ENCODE measurements at regions of chr17 and their contacts with region 1.

Region 1: GRCh38 chr17:45148183-45149036 is at the start of gene HEXIM1:
- DNase-seq: peak; percentile 98 to 100 (median 99)
- ATAC-seq: peak; percentile 78
- H3K4me3 ChIP-seq: peak within 1 kb of the TSS; percentile 94
- H3K4me3 Mint-ChIP-seq: peak within 1 kb of the TSS; percentile 94
- H3K27ac ChIP-seq: peak within 1 kb of the TSS; percentile 93 to 97
- H3K27ac Mint-ChIP-seq: peak within 1 kb of the TSS; percentile 99
- H3K4me1 ChIP-seq: peaks cover 71% of the 10 kb centered on the region
- H3K4me1 Mint-ChIP-seq: peaks cover 69% of the 10 kb centered on the region
- H3K27me3 ChIP-seq: no peaks in the 10 kb centered on the region
- H3K27me3 Mint-ChIP-seq: peaks cover 8% of the 10 kb centered on the region
- CTCF ChIP-seq: no peak
- total RNA-seq, gene HEXIM1: 50.5 to 50.9 TPM

Region 2: DNA sequence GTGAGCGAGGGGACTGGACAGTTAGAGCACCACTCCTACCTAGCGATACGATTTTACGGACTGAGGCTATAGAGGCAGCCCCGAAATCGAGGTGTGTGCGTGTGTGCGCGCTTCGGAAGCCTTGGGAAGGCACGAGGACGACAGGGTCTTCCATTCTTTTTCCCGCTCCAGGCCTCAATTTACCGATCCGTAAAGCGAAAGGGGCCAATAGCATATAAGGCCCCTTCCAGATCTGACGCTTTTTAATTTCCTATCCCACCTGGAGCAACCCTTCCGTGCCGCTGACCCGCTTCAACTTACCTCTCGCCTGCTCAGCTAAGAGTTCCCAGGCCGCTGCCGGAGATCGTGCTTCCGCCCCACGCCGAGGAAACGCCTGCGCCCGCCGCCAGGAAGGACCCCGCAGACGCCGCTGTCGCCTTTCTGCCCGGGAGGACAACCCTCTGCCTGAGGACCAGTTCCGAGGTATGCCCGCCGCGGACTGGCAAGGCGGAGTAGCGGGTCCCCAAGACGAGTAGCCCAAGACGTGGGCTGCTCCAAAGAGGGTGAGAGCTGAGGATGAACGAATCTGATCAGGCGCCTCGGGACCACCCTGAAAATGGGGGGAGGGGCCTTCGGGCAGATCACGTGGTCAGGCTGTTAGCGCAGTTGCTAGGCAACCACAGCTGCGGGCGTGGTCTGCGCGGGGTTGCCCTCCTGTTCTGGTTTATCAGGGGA is 249.2 kb before region 1 on chr17 and contains the start of gene EFTUD2:
- CTCF ChIA-PET with region 1: no interaction called
- POLR2A ChIA-PET with region 1: interaction called, 13 read pairs
- intact Hi-C with region 1: no loop called
- DNase-seq: peak; percentile 87 to 96 (median 91)
- ATAC-seq: peak; percentile 95
- H3K4me3 ChIP-seq: peak within 1 kb of the TSS; percentile 82
- H3K4me3 Mint-ChIP-seq: peak within 1 kb of the TSS; percentile 95
- H3K27ac ChIP-seq: peak within 1 kb of the TSS; percentile 98 to 99
- H3K27ac Mint-ChIP-seq: peak within 1 kb of the TSS; percentile 99
- H3K4me1 ChIP-seq: peaks cover 29% of the 10 kb centered on the region
- H3K4me1 Mint-ChIP-seq: peaks cover 37% of the 10 kb centered on the region
- H3K27me3 ChIP-seq: no peaks in the 10 kb centered on the region
- H3K27me3 Mint-ChIP-seq: peaks cover 10% of the 10 kb centered on the region
- CTCF ChIP-seq: no peak
- total RNA-seq, gene EFTUD2: 105 to 112 TPM

Region 3: DNA sequence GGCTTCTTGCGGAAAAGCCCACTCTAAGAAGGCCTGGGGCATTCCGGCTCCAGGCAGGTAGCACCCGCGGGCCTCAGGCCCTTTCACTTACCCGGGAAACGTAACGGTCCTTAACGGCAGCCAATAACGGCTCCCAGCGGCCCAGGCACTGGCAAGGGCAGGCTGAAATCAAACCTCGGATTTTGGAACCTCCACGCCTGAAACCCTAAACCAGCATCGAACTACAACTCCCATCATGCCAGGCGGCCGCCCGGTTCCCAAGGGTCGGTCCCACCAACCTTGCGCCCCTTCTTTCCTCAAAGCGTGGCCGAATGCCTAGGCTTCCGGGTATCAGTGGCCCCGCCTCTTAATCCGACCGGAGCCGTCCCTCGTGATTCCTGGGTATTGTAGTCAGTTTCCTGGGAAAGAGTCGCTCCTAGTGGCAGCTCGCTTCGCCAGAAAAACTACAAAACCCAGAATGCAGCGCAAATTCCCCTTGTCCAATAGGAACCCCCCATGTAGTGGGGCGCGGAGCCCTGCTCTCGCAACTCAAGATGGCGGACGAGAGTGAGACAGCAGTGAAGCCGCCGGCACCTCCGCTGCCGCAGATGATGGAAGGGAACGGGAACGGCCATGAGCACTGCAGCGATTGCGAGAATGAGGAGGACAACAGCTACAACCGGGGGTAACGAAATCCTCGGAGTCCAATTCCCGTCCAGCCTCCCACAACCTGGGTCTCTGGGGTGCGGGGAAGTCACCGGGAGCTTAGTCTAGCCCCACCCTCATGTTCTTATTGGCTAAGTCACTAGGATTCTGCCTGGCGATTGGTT is 87.4 kb before region 1 on chr17 and contains the start of gene NMT1:
- CTCF ChIA-PET with region 1: no interaction called
- POLR2A ChIA-PET with region 1: interaction called, 22 read pairs
- intact Hi-C with region 1: loop called in 1 of 2 experiments (anchors 5 kb)
- DNase-seq: peak; percentile 87 to 99 (median 92)
- ATAC-seq: peak; percentile 89
- H3K4me3 ChIP-seq: peak within 1 kb of the TSS; percentile 72
- H3K4me3 Mint-ChIP-seq: peak within 1 kb of the TSS; percentile 100
- H3K27ac ChIP-seq: peak within 1 kb of the TSS; percentile 80 to 87
- H3K27ac Mint-ChIP-seq: peak within 1 kb of the TSS; percentile 92
- H3K4me1 ChIP-seq: peaks cover 50% of the 10 kb centered on the region
- H3K4me1 Mint-ChIP-seq: peaks cover 55% of the 10 kb centered on the region
- H3K27me3 ChIP-seq: no peaks in the 10 kb centered on the region
- H3K27me3 Mint-ChIP-seq: no peaks in the 10 kb centered on the region
- CTCF ChIP-seq: no peak
- total RNA-seq, gene NMT1: 61.1 to 62.2 TPM

Region 4: DNA sequence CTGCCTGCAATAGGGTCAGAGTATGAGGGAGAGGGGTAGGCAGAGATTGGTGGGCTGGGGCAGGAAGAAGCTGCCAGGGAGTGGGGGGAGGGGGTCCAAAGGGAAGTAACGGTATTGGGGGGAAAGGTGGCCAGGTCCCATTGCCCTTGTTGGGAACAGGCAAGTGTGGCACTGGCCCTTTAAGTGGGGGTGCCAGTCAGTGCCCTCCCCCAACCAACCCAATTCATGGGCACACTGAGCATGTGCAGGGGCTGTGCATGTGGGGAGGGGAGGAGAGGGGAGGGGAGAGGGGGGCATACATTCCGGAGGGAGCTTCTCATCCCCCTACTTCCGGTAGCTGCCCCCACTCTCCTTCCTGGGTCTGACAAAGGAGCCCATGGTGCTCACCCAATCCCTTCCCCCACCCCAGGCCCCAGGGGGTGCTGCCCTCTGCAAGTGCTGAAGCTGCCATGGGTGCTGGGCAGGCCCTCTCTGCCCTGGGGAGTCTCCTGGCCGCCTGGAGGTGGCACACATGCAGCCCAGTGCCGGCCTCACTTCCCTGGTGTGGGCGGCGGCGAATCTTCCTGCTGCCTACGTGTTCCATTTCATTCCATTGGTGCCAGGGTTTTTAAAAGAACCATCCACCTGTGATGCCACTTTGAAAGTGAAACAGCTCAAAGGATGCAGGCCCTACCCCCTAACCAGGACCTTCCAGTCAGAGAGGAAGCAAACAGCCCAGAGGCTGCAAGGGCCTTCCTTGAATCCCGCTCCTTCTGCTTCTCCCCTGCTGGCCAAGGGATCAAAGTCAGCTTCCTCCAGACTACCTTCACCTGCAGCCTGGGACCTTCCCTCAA is 24.3 kb after region 1 on chr17:
- CTCF ChIA-PET with region 1: interaction called, 5 read pairs
- POLR2A ChIA-PET with region 1: interaction called, 122 read pairs
- intact Hi-C with region 1: loop called in 1 of 2 experiments (anchors 2 kb)
- DNase-seq: peak; percentile 11 to 75 (median 52)
- ATAC-seq: peak; percentile 83
- H3K4me3 ChIP-seq: peak overlapping the region; percentile 45
- H3K4me3 Mint-ChIP-seq: peak overlapping the region; percentile 83
- H3K27ac ChIP-seq: peak overlapping the region in 1 of 2 donors; percentile 44
- H3K27ac Mint-ChIP-seq: peak overlapping the region; percentile 76
- H3K4me1 ChIP-seq: peaks cover 23% of the 10 kb centered on the region
- H3K4me1 Mint-ChIP-seq: peaks cover 26% of the 10 kb centered on the region
- H3K27me3 ChIP-seq: no peaks in the 10 kb centered on the region
- H3K27me3 Mint-ChIP-seq: no peaks in the 10 kb centered on the region
- CTCF ChIP-seq: peak; percentile 46

Region 5: DNA sequence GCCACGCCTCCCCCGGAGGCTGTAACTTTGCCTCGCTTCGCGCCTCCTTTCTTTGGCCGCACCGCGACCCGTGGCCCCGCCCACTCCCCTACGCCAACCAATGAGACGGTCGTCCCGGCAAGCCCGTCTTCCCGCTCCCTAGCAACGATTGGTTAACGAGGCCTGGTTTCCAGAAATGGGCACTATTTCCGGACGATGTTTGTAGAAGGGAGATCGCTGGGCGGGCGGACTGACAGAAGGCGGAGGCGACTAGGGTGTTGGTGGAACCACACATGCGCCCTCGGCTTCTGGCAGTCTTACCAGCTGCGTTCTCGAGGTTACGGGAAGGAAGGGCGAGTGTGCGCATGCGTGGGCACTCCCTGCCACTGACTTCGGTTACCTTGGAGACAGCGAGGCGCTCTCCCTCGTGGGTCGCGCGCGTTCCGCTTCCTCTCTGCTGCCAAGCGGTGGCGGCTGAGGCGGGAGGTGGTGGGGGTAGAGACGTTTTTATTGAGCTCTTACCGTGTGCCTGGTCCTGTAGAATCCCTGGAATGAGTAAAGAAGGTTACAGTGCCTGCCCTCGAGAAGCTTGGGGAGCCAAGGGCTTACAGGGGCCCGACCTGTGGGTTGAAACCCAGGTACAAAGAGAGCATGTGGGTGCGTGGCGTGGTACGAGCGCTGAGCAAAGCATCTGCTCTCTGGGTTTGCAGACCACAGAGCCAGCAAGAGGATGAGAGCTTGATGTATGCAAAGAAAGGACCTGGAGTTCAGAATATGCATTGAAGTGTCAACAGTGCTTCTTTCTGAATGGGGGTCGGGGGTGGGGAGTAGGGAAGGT is 168.9 kb after region 1 on chr17:
- CTCF ChIA-PET with region 1: interaction called, 8 read pairs
- POLR2A ChIA-PET with region 1: interaction called, 34 read pairs
- intact Hi-C with region 1: loop called in 1 of 2 experiments (anchors 5 kb)
- DNase-seq: peak; percentile 93 to 100 (median 100)
- ATAC-seq: peak; percentile 83
- H3K4me3 ChIP-seq: peak overlapping the region; percentile 88
- H3K4me3 Mint-ChIP-seq: peak overlapping the region; percentile 98
- H3K27ac ChIP-seq: peak overlapping the region; percentile 51 to 79
- H3K27ac Mint-ChIP-seq: peak overlapping the region; percentile 85
- H3K4me1 ChIP-seq: peaks cover 81% of the 10 kb centered on the region
- H3K4me1 Mint-ChIP-seq: peaks cover 88% of the 10 kb centered on the region
- H3K27me3 ChIP-seq: no peaks in the 10 kb centered on the region
- H3K27me3 Mint-ChIP-seq: no peaks in the 10 kb centered on the region
- CTCF ChIP-seq: no peak

Measured in CD4-positive, alpha-beta T cell (primary cell).